ENCODE measurements at regions of chr1 and their contacts with region 1.

Region 1: DNA sequence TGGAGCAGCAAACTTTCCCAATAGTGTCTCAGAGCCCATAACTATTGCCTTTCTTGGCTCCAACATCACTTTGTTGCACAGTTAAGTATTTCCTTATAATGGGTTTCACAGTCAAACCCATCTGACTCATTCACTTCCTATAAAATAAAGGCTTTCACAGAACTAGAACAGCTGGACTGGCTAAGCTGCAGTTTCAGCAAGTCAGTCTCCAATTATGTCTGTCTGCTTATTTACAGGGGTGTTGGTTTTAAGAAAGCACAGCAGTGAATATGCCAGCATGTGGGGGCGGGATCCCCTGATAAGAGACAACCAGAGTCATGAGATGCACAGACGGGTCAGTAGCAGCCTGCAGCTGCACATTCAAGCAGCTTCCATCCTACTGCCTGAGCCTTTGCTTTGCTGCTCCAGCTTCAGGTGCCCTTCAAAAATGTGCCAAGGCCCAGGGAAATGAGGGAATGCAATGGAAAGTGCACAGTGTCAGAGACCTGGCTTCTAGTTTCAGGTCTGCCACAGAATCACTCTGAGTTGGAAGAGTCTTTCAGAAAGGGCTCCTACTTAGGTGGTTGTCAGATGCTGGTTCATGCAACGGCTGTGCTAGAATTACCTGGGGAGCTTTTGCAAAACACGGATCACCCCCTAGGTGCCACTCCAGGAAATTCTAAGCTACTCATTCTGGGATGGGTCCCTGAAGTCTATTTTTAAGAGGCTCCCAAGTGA is 24.8 kb downstream of the RNF19B start:
- DNase-seq: peak in 1 of 2 donors; percentile 73
- ATAC-seq: peak; percentile 74 to 92 (median 83)
- H3K4me3 ChIP-seq: no peak overlapping the region
- H3K27ac ChIP-seq: peak overlapping the region in 6 of 10 donors; percentile 5 to 60 (median 34)
- H3K4me1 ChIP-seq: peaks cover 4 to 56% (median 16%) of the 10 kb centered on the region in 9 donors
- H3K27me3 ChIP-seq: no peaks in the 10 kb centered on the region
- CTCF ChIP-seq: no peak

Region 2: GRCh38 chr1:33007190-33008050 is 67.6 kb after region 1 on chr1:
- intact Hi-C with region 1: loop called in 2 of 10 experiments (anchors 10 kb)
- DNase-seq: peak in 1 of 2 donors; percentile 30
- ATAC-seq: peak in 7 of 8 donors; percentile 31 to 74 (median 56)
- H3K4me3 ChIP-seq: no peak overlapping the region
- H3K27ac ChIP-seq: peak overlapping the region in 4 of 10 donors; percentile 13 to 95 (median 88)
- H3K4me1 ChIP-seq: peaks cover 24 to 99% (median 75%) of the 10 kb centered on the region in 9 donors
- H3K27me3 ChIP-seq: no peaks in the 10 kb centered on the region
- CTCF ChIP-seq: peak in 8 of 9 donors; percentile 29 to 56 (median 54)

Region 3: DNA sequence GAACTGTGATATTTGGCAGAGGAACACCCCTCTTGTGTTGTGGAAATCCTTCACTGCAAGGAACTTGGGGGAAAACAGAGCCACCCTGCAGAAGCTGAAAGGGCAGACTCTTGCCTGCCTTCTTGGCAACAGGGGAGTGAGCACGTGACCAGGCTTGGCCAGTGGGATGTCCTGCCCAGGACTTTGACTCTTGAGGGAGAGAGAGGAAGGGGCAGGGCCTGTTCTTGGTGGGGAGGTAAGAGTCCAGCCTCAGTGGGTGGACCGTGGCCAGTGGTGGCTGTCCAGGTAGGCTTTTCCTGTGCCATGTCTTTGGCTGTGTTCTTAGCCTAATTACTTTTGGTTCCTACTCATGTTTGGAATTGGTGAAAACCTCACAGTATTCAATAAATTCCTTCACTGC is 105.4 kb after region 1 on chr1:
- intact Hi-C with region 1: loop called in 3 of 10 experiments (anchors 10 kb)
- DNase-seq: no peak
- ATAC-seq: peak in 1 of 8 donors; percentile 36
- H3K4me3 ChIP-seq: no peak overlapping the region
- H3K27ac ChIP-seq: peak overlapping the region in 1 of 10 donors; percentile 63
- H3K4me1 ChIP-seq: peaks cover 0 to 33% (median 8%) of the 10 kb centered on the region in 9 donors
- H3K27me3 ChIP-seq: no peaks in the 10 kb centered on the region
- CTCF ChIP-seq: no peak

Region 4: GRCh38 chr1:33055210-33056008 is 115.6 kb after region 1 on chr1:
- intact Hi-C with region 1: loop called in 4 of 10 experiments (anchors 2 to 10 kb)
- DNase-seq: peak; percentile 75 to 91
- ATAC-seq: peak; percentile 88 to 98 (median 95)
- H3K4me3 ChIP-seq: no peak overlapping the region
- H3K27ac ChIP-seq: peak overlapping the region in 8 of 10 donors; percentile 24 to 74 (median 50)
- H3K4me1 ChIP-seq: peaks cover 4 to 24% (median 14%) of the 10 kb centered on the region in 9 donors
- H3K27me3 ChIP-seq: no peaks in the 10 kb centered on the region
- CTCF ChIP-seq: peak; percentile 58 to 82 (median 78)

Region 5: GRCh38 chr1:33295450-33296081 is 355.8 kb after region 1 on chr1:
- intact Hi-C with region 1: no loop called
- DNase-seq: peak; percentile 85 to 89
- ATAC-seq: peak; percentile 73 to 93 (median 84)
- H3K4me3 ChIP-seq: no peak overlapping the region
- H3K27ac ChIP-seq: peak overlapping the region in 4 of 10 donors; percentile 13 to 24 (median 15)
- H3K4me1 ChIP-seq: peaks cover 0 to 27% (median 17%) of the 10 kb centered on the region in 9 donors
- H3K27me3 ChIP-seq: no peaks in the 10 kb centered on the region
- CTCF ChIP-seq: peak; percentile 88 to 99 (median 96)